ENCODE measurements at regions of chr12 and their contacts with region 1.

Region 1: GRCh38 chr12:125773033-125773640 is 707.9 kb downstream of the AACS start:
- DNase-seq: peak; percentile 72
- H3K4me3 ChIP-seq: no peak overlapping the region
- H3K27ac ChIP-seq: no peak overlapping the region
- H3K4me1 ChIP-seq: no peaks in the 10 kb centered on the region
- H3K27me3 ChIP-seq: peaks cover 4% of the 10 kb centered on the region
- CTCF ChIP-seq: peak; percentile 70

Region 2: DNA sequence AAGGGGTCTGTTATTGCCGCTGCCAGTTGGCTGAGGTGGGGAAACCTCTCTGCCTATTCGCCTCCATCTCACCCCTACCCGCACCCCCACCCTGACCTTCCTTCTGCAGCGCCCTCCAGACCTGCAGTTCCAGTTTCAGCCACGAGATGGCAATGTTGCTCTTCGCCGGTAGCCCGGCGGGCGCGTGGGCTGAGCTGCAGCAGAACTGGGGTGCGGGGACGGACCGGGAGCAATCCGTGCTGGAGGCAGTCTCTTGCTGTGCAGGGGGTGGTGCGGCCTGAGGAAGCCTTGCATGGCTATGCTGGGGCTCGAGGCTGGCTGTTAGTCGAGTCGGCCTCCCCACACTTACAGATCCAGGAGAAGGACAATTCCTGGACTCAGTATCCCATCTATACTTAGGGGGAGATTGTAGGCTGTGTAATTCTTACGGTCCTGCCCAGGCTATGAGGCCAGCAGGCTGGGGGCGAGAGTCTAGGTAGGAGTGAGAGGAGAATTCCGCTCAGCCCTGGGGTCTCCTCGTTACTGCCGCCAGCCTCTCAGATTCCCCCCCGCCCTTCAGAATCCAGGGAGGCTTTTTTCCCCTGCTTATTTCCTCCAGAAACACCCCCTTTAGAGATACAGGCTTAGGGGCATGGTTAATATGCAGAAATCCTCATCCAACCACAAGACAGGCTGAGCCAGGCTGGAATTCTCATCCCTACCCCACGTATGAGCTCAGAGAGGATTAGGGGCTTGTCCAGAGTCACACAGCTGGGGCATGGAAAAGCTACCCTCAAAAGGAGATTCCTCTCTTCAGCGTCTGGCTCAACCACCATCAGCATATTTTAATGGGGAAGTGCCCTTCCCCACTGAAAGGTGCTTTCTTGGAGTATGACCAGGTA is 589.7 kb before region 1 on chr12:
- CTCF ChIA-PET with region 1: no interaction called
- POLR2A ChIA-PET with region 1: no interaction called
- intact Hi-C with region 1: loop called (anchors 10 kb)
- DNase-seq: peak; percentile 89
- H3K4me3 ChIP-seq: no peak overlapping the region
- H3K27ac ChIP-seq: no peak overlapping the region
- H3K4me1 ChIP-seq: peaks cover 31% of the 10 kb centered on the region
- H3K27me3 ChIP-seq: peaks cover 27% of the 10 kb centered on the region
- CTCF ChIP-seq: peak; percentile 99

Region 3: DNA sequence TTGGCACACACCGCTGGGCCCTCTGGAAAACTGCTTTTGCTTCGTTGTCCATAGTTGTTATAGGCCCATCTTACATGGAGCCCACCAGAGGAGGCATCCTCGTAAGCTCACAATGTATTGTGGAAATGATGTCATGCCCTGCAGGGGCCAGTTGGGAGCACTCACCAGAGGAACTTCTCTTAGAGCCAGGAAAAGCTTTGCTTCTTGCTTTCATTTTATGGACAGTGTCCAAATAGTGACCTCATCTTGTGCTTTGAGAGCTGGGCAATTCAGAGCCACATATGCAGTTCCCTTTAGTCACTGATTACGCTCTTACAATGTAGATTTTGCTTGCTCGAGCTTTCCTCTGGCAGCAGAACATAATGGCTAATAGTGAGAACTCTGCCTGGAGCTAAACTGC is 432.3 kb before region 1 on chr12:
- CTCF ChIA-PET with region 1: no interaction called
- POLR2A ChIA-PET with region 1: no interaction called
- intact Hi-C with region 1: loop called (anchors 10 kb)
- DNase-seq: peak; percentile 64
- H3K4me3 ChIP-seq: no peak overlapping the region
- H3K27ac ChIP-seq: no peak overlapping the region
- H3K4me1 ChIP-seq: no peaks in the 10 kb centered on the region
- H3K27me3 ChIP-seq: peaks cover 4% of the 10 kb centered on the region
- CTCF ChIP-seq: no peak

Region 4: GRCh38 chr12:125824276-125824675 is 51.1 kb after region 1 on chr12:
- CTCF ChIA-PET with region 1: no interaction called
- POLR2A ChIA-PET with region 1: no interaction called
- intact Hi-C with region 1: no loop called
- DNase-seq: no peak
- H3K4me3 ChIP-seq: no peak overlapping the region
- H3K27ac ChIP-seq: no peak overlapping the region
- H3K4me1 ChIP-seq: no peaks in the 10 kb centered on the region
- H3K27me3 ChIP-seq: peaks cover 4% of the 10 kb centered on the region
- CTCF ChIP-seq: no peak